ENCODE measurements at regions of chr5 and their contacts with region 1.

Region 1: DNA sequence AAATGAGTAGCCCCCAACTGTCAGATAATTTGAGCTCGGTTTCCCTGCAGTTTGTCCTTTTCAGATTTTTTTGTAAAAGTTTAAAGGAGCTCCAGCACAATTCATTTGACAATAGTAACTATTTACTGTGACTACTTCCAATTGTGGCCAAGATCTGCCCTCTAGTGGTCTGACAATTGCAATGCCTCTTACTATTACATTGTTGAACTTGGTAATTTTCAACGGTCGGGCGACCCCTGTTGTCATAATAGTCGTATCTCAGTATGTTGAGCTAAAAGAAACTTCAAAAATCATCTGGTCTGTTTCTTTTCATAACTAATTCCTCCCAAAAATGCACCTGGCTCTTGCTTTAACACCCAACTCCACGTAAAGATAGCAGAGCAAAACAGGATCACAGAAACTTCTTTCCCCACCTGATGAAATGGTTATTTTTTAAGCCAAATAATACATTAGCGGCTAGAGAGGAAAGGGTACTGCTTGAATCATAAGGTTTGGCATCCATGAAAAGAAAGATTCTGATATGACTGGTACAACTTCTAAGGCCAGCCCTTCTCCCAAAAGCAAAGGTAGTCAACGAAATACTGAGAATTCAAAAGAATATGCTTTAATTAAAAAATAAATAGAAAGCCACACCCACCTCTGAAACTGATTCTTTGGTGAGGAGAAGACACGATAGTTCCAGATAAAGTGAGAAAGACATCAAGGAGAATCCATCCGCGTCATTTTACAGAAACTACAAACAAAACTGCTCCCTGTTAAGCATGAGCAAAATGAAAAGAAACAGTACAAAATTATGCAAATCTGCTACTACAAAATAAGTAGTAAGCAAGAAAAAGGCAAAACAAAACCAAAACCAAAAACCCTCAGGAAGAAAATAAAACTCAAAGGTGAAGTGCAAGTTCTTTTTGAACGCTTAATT is 76.9 kb upstream of the HTR4 start:
- DNase-seq: peak; percentile 82
- H3K4me3 Mint-ChIP-seq: peak overlapping the region; percentile 47
- H3K27ac Mint-ChIP-seq: peak overlapping the region; percentile 4
- H3K4me1 Mint-ChIP-seq: peaks cover 46% of the 10 kb centered on the region
- H3K27me3 Mint-ChIP-seq: no peaks in the 10 kb centered on the region
- CTCF ChIP-seq: peak; percentile 91

Region 2: DNA sequence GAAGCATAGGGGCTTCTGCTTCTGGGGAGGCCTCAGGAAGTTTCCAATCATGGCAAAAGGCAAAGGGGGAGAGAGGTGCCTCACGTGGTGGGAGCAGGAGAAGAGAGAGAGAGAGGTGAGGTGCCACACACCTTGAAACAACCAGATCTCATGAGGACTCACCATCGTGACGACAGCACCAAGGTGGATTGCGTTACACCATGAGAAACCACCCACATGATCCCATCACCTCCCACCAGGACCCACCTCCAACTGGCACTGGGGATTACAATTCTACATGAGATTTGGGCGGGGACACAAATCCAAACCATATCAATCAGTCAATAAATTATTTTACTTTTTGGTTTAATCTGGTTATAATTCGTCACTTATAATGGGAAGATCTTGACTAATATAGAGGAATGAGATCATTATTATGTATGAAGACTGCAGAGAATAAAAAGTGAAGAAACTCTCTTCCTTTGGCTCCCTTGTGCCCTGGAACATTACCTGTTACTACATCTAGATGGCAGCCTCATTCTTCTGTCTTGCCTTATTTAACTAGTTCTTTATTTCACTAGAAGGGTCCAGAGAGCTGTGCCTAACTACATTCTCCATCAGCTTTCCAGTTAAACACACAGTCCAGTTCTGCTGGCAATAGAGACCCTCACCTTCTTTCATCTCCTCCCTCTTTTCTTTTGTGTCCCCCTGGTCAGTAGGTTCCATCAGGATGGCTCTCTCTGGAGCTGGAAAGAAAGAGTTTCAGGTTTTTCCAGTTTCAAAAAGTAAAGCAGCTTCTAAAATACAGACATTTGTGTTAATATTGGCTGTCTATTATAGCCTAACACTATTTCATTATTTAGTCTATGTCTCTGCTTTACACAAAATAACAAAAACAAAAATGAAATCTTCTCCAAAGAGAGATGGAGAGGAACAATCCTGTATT is 440.7 kb before region 1 on chr5:
- CTCF ChIA-PET with region 1: no interaction called
- intact Hi-C with region 1: loop called (anchors 5 kb)
- DNase-seq: no peak
- H3K4me3 Mint-ChIP-seq: no peak overlapping the region
- H3K27ac Mint-ChIP-seq: no peak overlapping the region
- H3K4me1 Mint-ChIP-seq: peaks cover 11% of the 10 kb centered on the region
- H3K27me3 Mint-ChIP-seq: no peaks in the 10 kb centered on the region
- CTCF ChIP-seq: peak; percentile 61

Region 3: DNA sequence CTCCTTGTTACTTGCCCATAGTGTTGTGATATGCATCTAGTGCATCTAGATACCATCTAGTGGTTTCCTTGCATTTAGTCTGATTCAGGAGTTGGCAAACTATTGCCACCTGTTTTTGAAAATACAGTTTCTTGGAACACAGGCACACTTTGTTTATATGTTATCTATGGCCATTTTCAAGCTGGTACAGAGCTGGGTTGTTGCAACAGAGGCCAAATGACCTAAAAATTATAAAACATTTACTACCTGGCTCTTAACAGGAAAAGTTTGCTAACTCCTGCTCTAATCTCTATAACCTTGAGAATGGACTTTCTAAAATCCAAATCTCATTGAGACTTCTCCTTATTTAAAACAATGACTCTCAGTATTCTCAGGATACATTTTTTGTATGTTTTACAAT is 366.9 kb before region 1 on chr5:
- CTCF ChIA-PET with region 1: no interaction called
- intact Hi-C with region 1: no loop called
- DNase-seq: no peak
- H3K4me3 Mint-ChIP-seq: no peak overlapping the region
- H3K27ac Mint-ChIP-seq: no peak overlapping the region
- H3K4me1 Mint-ChIP-seq: no peaks in the 10 kb centered on the region
- H3K27me3 Mint-ChIP-seq: no peaks in the 10 kb centered on the region
- CTCF ChIP-seq: no peak

Region 4: DNA sequence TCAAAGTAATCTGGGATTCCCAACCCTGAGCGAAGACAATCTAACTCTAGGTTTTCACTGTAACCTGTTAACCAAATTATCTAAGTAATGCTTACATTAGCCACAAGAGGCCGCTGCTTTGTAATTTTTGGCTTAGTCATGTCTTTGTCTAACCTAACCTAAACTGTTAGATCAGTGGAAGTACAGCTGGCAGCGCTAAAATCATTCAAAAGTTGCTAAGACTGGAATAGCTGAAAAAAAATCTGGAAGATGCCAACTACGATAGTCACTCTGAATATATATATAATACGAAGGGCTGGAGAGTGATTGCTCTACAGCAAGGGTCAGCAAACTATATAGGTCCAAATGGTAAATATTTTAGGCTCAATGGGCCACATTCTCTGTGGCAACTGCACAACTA is 287.2 kb before region 1 on chr5:
- CTCF ChIA-PET with region 1: interaction called, 41 read pairs
- intact Hi-C with region 1: loop called (anchors 1 kb)
- DNase-seq: peak; percentile 70
- H3K4me3 Mint-ChIP-seq: no peak overlapping the region
- H3K27ac Mint-ChIP-seq: peak overlapping the region; percentile 23
- H3K4me1 Mint-ChIP-seq: no peaks in the 10 kb centered on the region
- H3K27me3 Mint-ChIP-seq: peaks cover under 1% of the 10 kb centered on the region
- CTCF ChIP-seq: peak; percentile 76

Region 5: DNA sequence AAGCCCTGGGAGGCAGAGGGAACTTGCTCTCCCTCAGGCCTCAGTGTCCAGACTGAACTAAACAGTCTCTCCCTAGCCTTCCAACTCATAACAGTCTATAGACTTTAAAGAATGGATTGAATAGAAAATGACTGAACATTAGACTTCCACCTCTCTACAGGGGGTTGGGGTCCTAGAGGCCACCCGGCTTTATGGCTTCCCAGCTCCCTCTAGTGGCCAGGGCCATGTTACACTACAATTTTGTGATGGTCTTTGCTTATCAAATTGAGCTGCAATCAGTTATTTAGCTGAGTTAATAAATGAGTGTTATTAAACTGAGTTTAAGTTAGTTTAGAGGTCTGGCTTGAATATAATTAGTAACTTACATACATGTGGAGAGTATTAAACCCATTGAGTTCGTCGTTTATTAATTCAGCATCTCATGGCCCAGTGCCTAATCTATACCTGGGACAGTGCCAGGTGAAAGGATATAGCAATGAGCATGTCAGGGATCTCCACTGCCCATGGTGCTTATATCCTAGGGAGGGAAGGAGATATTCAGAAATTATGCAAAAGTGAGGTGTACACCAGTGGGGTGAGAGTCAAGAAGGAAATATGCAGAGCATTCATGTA is 226.5 kb after region 1 on chr5:
- CTCF ChIA-PET with region 1: interaction called, 12 read pairs
- intact Hi-C with region 1: loop called (anchors 1 kb)
- DNase-seq: peak; percentile 79
- H3K4me3 Mint-ChIP-seq: no peak overlapping the region
- H3K27ac Mint-ChIP-seq: no peak overlapping the region
- H3K4me1 Mint-ChIP-seq: peaks cover 68% of the 10 kb centered on the region
- H3K27me3 Mint-ChIP-seq: no peaks in the 10 kb centered on the region
- CTCF ChIP-seq: peak; percentile 93

Region 6: GRCh38 chr5:149035372-149035790 is 304.2 kb after region 1 on chr5:
- CTCF ChIA-PET with region 1: interaction called, 21 read pairs
- intact Hi-C with region 1: loop called (anchors 1 kb)
- DNase-seq: peak; percentile 89
- H3K4me3 Mint-ChIP-seq: no peak overlapping the region
- H3K27ac Mint-ChIP-seq: peak overlapping the region; percentile 18
- H3K4me1 Mint-ChIP-seq: peaks cover 41% of the 10 kb centered on the region
- H3K27me3 Mint-ChIP-seq: no peaks in the 10 kb centered on the region
- CTCF ChIP-seq: peak; percentile 82

Region 7: GRCh38 chr5:149268928-149269557 is 537.8 kb after region 1 on chr5:
- CTCF ChIA-PET with region 1: interaction called, 7 read pairs
- intact Hi-C with region 1: loop called (anchors 1 kb)
- DNase-seq: peak; percentile 18
- H3K4me3 Mint-ChIP-seq: no peak overlapping the region
- H3K27ac Mint-ChIP-seq: no peak overlapping the region
- H3K4me1 Mint-ChIP-seq: peaks cover 28% of the 10 kb centered on the region
- H3K27me3 Mint-ChIP-seq: no peaks in the 10 kb centered on the region
- CTCF ChIP-seq: peak; percentile 72